Cardiac septum (tissue), 1 donor: ENCODE measurements at regions of chr4 and their contacts with region 1.

Region 1: GRCh38 chr4:72286185-72286584 is 254.4 kb downstream of the NPFFR2 start:
- DNase-seq: no peak

Region 2: GRCh38 chr4:71732706-71733105 is 553.5 kb before region 1 on chr4:
- intact Hi-C with region 1: loop called (anchors 10 kb)
- DNase-seq: no peak